Activated T-helper 1 cell treated with anti-CD3 and anti-CD28 coated beads, Interleukin-12 subunit alpha, Interleukin-12 subunit beta, Interleukin-2, Interleukin-4 antibody, amounts not matched to agents 30 ng/mL and 10 ng/mL and 1 ng/mL, durations not matched to agents 14 hours and 24 hours and 36 hours (primary cell): ENCODE measurements at regions of chr2 and their contacts with region 1.

Region 1: GRCh38 chr2:202870431-202871299 is 901 bp downstream of the ICA1L start:
- DNase-seq: peak; percentile 32
- H3K4me3 Mint-ChIP-seq: peak overlapping the region; percentile 90
- H3K27ac Mint-ChIP-seq: peak overlapping the region; percentile 76
- H3K4me1 Mint-ChIP-seq: peaks cover 14% of the 10 kb centered on the region
- H3K27me3 Mint-ChIP-seq: peaks cover 8% of the 10 kb centered on the region

Region 2: DNA sequence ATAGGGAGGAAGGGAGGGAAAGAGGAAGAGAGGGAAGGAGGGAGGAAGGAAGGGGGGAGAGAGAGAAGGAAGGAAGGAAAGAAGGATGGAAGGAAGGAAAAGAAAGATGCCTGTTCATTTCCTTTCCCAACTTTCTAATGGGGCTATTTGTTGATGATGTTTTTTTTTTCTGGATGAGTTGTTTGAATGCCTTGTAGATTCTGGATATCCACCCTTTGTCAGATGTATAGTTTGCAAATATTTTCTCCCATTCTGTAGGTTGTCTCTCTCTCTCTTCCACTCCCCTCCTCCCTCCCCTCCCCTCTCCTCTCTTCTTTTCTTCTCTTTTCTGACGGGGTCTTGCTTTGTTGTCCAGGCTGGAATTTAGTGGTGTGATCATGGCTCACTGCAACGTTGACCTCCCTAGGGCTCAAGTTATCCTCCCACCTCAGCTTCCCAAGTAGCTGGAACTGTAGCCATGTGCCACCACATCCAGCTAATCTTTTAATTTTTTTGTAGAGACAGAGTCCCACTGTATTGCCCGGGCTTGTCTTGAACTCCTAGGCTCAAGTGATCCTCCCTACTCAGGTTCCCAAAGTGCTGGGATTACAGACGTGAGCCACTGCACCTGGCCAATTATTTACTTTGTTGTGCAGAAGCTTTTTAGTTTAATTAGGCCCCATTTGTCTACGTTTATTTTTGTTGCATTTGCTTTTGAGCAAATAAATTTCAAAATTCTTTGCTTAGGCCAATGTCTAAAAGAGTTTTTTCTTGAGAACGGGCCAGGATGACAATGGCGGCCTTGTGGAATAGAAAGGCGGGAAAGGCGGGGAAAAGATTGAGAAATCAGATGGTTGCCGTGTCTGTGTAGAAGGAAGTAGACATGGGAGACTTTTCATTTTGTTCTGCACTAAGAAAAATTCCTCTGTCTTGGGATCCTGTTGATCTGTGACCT is 293.1 kb before region 1 on chr2:
- intact Hi-C with region 1: loop called (anchors 1 kb)
- DNase-seq: no peak
- H3K4me3 Mint-ChIP-seq: no peak overlapping the region
- H3K27ac Mint-ChIP-seq: no peak overlapping the region
- H3K4me1 Mint-ChIP-seq: peaks cover under 1% of the 10 kb centered on the region
- H3K27me3 Mint-ChIP-seq: no peaks in the 10 kb centered on the region

Region 3: DNA sequence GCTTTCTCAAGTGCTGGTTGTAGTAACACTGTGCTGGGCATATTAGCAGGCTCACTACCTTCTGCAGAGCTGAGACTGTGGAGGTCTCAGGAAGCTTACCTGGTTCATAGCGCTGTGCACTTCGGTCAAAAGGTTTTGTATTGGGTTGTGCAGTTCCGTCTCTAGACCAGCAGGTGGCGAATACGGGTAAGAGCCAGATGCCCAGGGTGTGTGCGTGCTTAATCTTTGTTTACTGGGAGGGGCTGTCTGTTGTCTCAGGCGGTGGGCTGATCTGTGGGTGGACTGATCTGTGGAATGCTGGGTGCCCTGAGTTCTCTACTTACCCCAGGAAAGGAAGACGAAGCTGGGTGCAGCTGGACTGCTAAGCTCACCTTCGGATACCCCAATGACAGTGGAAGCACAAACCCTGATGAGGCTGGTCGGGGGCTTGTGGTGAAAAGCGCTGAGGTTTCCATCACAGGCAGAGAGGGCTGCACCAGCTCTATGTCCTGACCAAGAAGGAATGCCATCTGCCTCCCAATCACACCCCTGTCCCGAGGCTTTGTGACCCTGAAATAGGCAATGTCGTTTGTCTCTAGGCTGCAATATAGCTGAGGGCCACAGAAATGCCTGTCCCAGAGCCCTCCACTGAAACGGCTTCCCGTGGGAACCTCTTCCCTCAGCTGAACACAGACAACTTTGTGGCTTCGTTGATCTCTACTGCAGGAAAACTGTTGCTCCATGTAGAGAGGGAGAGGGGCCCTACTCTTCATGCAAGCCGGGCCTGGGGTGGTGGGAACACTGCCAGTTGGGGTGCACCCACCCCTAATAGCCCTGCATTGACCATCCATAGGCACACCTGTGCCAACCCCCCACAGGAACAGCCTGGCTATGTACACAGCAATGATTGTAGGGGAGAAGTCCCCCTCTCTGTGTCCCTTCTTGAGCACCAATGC is 281.8 kb before region 1 on chr2:
- intact Hi-C with region 1: loop called (anchors 1 kb)
- DNase-seq: peak; percentile 49
- H3K4me3 Mint-ChIP-seq: no peak overlapping the region
- H3K27ac Mint-ChIP-seq: no peak overlapping the region
- H3K4me1 Mint-ChIP-seq: peaks cover 7% of the 10 kb centered on the region
- H3K27me3 Mint-ChIP-seq: no peaks in the 10 kb centered on the region

Region 4: GRCh38 chr2:202762556-202762955 is 108.1 kb before region 1 on chr2:
- intact Hi-C with region 1: loop called (anchors 5 kb)
- DNase-seq: no peak
- H3K4me3 Mint-ChIP-seq: peak overlapping the region; percentile 1
- H3K27ac Mint-ChIP-seq: peak overlapping the region; percentile 9
- H3K4me1 Mint-ChIP-seq: peaks cover 23% of the 10 kb centered on the region
- H3K27me3 Mint-ChIP-seq: no peaks in the 10 kb centered on the region

Region 5: GRCh38 chr2:202831242-202832220 is 39.1 kb before region 1 on chr2:
- intact Hi-C with region 1: loop called (anchors 2 kb)
- DNase-seq: peak; percentile 11
- H3K4me3 Mint-ChIP-seq: no peak overlapping the region
- H3K27ac Mint-ChIP-seq: no peak overlapping the region
- H3K4me1 Mint-ChIP-seq: peaks cover 10% of the 10 kb centered on the region
- H3K27me3 Mint-ChIP-seq: peaks cover 3% of the 10 kb centered on the region

Region 6: GRCh38 chr2:202911512-202912341 is 41.1 kb after region 1 on chr2 and contains the starts of genes CARF and WDR12:
- intact Hi-C with region 1: loop called (anchors 1 kb)
- DNase-seq: peak; percentile 87
- H3K4me3 Mint-ChIP-seq: peak within 1 kb of the TSS; percentile 96
- H3K27ac Mint-ChIP-seq: peak within 1 kb of the TSS; percentile 98
- H3K4me1 Mint-ChIP-seq: peaks cover 31% of the 10 kb centered on the region
- H3K27me3 Mint-ChIP-seq: no peaks in the 10 kb centered on the region
- total RNA-seq, gene CARF: 3.6 and 4.3 TPM in 2 replicates
- total RNA-seq, gene WDR12: 149 and 165 TPM in 2 replicates

Region 7: GRCh38 chr2:202965810-202966460 is 95.3 kb after region 1 on chr2:
- intact Hi-C with region 1: no loop called
- DNase-seq: peak; percentile 26
- H3K4me3 Mint-ChIP-seq: no peak overlapping the region
- H3K27ac Mint-ChIP-seq: no peak overlapping the region
- H3K4me1 Mint-ChIP-seq: peaks cover 12% of the 10 kb centered on the region
- H3K27me3 Mint-ChIP-seq: no peaks in the 10 kb centered on the region